ACHN (cell line): ENCODE measurements at regions of chr15 and their contacts with region 1.

Region 1: GRCh38 chr15:74768771-74769342 is 13.0 kb upstream of the CSK start:
- DNase-seq: peak; percentile 52

Region 2: GRCh38 chr15:74635228-74635627 is 133.6 kb before region 1 on chr15:
- in situ Hi-C with region 1: loop called (anchors 25 kb)
- DNase-seq: peak; percentile 56